Activated CD4-positive, alpha-beta T cell treated with anti-CD3 and anti-CD28 coated beads for 36 hours (primary cell): ENCODE measurements at regions of chr1 and their contacts with region 1.

Region 1: GRCh38 chr1:160328184-160328583 is 14.9 kb downstream of the COPA start:
- DNase-seq: no peak
- ATAC-seq: no peak
- H3K4me3 Mint-ChIP-seq: no peak overlapping the region
- H3K27ac Mint-ChIP-seq: no peak overlapping the region
- H3K4me1 Mint-ChIP-seq: no peaks in the 10 kb centered on the region
- H3K27me3 Mint-ChIP-seq: no peaks in the 10 kb centered on the region

Region 2: GRCh38 chr1:160354388-160354985 is 26.3 kb after region 1 on chr1:
- CTCF ChIA-PET with region 1: interaction called, 12 read pairs
- POLR2A ChIA-PET with region 1: no interaction called
- intact Hi-C with region 1: no loop called
- DNase-seq: peak; percentile 47
- ATAC-seq: peak; percentile 74
- H3K4me3 Mint-ChIP-seq: no peak overlapping the region
- H3K27ac Mint-ChIP-seq: no peak overlapping the region
- H3K4me1 Mint-ChIP-seq: no peaks in the 10 kb centered on the region
- H3K27me3 Mint-ChIP-seq: no peaks in the 10 kb centered on the region